Heart right ventricle (tissue), 16 donors: ENCODE measurements at regions of chr4 and their contacts with region 1.

Region 1: GRCh38 chr4:46909078-46909477 is at the start of gene COX7B2:
- DNase-seq: no peak
- ATAC-seq: no peak
- H3K4me3 ChIP-seq: no peak within 1 kb of the TSS
- H3K27ac ChIP-seq: no peak within 1 kb of the TSS
- H3K4me1 ChIP-seq: no peaks in the 10 kb centered on the region
- H3K27me3 ChIP-seq: no peaks in the 10 kb centered on the region
- CTCF ChIP-seq: no peak
- total RNA-seq, gene COX7B2: not detected

Region 2: DNA sequence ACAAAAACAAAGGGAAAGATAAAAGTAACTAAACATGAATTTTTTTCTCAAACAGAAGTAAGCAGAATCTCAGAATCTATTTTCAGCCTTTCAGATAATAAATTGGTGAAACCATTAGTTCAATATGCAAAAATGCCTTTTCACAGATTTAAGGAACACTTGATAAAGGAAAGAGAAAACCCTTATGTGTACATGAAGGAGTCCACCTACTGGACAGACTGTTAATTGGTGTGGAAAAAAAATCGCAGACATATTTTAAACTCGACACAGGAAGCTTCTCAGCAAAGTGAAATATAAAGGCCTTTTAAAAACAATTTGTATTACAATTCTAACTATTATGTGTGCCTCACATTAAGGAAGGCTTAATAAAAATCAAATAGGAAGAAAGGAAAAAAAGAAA is 22.4 kb before region 1 on chr4:
- intact Hi-C with region 1: loop called in 1 of 10 experiments (anchors 1 kb)
- DNase-seq: no peak
- ATAC-seq: no peak
- H3K4me3 ChIP-seq: no peak overlapping the region
- H3K27ac ChIP-seq: no peak overlapping the region
- H3K4me1 ChIP-seq: no peaks in the 10 kb centered on the region
- H3K27me3 ChIP-seq: peaks cover 0 to 1% (median 0%) of the 10 kb centered on the region in 7 donors
- CTCF ChIP-seq: peak in 6 of 9 donors; percentile 11 to 41 (median 32)

Region 3: DNA sequence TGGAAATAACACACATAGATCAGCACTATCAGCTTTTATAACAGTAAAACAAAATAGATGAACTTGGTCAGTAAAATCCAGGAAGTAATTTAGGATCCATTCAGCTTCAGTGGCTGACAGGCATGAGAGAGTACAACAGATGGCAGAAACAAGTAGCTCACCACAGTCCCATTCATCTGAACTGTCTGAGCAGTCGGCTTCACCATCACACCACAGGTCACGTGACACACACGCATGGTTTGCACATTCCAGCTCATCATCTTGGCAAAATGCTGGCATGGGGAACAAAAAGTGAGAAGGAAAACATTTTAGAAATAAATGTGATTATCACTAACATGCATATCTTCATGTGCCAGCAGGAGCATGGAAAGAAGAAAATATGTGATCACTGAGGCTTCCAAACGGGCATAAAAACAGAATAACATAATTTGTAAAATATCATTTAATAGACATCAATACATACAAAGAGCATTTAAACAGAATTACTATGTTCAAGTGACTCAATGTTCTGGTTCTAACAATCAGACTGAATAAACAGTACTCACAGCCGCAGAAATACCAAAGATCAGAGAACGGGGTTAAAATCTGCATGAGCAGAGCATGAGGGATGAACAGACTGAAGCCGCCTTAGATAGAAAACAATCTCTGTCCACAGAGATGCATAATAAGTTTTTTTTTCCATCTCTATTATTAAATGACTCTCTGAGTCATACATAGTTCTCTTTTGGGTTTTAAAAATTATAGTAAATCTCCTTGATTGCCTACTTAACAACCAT is 734.1 kb after region 1 on chr4:
- intact Hi-C with region 1: no loop called
- DNase-seq: no peak
- ATAC-seq: no peak
- H3K4me3 ChIP-seq: no peak overlapping the region
- H3K27ac ChIP-seq: no peak overlapping the region
- H3K4me1 ChIP-seq: peaks cover 0 to 19% (median 0%) of the 10 kb centered on the region in 9 donors
- H3K27me3 ChIP-seq: no peaks in the 10 kb centered on the region
- CTCF ChIP-seq: no peak